ENCODE measurements at regions of chr2 and their contacts with region 1.

Region 1: DNA sequence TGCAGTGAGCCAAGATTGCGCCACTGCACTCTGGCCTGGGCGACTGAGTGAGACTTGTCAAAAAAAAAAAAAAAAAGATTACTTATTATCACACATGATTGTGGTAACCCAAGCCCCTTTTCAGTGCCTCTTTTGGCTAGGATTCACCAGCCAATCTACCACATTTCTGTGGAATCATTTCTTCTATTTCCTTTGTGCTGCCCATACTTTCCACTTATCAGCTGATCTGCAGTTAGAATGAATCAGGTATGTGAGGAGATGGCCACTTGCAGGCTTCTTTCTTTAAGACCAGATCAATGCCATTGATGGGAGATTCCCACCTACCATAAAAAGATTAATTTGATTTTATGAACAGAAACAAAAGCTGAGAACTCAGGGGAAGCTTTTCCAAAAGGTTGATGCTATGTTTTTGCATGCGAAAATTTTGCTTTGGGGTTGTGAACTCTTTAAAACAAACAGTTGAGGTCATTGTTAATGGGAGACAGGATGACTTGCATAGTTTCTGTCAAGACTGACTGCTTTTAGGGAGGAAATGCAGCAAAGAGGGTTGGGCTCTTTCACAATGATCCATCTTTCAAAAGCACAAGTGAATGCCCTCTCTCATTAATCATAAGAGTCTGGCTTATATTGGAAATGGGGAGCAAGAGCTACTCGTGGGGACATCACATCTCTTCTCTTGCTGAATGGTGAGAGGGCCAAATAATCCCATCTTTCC is 66.9 kb upstream of the CYP26B1 start:
- DNase-seq: peak; percentile 48
- H3K4me3 ChIP-seq: no peak overlapping the region
- H3K27ac ChIP-seq: no peak overlapping the region
- H3K4me1 ChIP-seq: peaks cover 6% of the 10 kb centered on the region
- H3K27me3 ChIP-seq: no peaks in the 10 kb centered on the region
- CTCF ChIP-seq: no peak

Region 2: DNA sequence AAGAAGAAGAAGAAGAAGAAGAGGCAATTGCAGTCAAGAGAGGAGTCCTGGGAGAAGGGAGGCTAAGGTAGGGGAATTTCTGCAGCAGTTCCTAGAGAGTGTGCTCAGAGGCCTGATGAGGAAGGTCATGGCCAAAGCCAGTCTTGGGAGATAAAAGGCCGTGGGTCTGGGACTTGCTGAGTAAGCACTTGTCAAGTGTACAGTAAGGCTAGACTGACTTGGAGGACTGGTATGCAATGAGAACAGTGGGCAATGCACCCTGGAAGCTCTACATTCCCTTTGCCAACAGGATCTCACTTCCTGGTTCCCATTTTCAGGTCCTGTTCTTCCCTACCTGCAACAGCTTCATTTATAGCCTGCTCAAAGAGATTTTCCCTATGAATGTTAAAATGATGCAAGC is 38.3 kb before region 1 on chr2:
- CTCF ChIA-PET with region 1: no interaction called
- dilution Hi-C with region 1: loop called (anchors 5 kb)
- in situ Hi-C with region 1: no loop called
- intact Hi-C with region 1: no loop called
- DNase-seq: no peak
- H3K4me3 ChIP-seq: no peak overlapping the region
- H3K27ac ChIP-seq: no peak overlapping the region
- H3K4me1 ChIP-seq: no peaks in the 10 kb centered on the region
- H3K27me3 ChIP-seq: no peaks in the 10 kb centered on the region
- CTCF ChIP-seq: no peak

Region 3: GRCh38 chr2:72254831-72255447 is 40.4 kb after region 1 on chr2:
- CTCF ChIA-PET with region 1: no interaction called
- dilution Hi-C with region 1: loop called (anchors 5 kb)
- in situ Hi-C with region 1: no loop called
- intact Hi-C with region 1: no loop called
- DNase-seq: no peak
- H3K4me3 ChIP-seq: no peak overlapping the region
- H3K27ac ChIP-seq: no peak overlapping the region
- H3K4me1 ChIP-seq: no peaks in the 10 kb centered on the region
- H3K27me3 ChIP-seq: no peaks in the 10 kb centered on the region
- CTCF ChIP-seq: no peak

Region 4: GRCh38 chr2:72533765-72534164 is 319.2 kb after region 1 on chr2:
- CTCF ChIA-PET with region 1: no interaction called
- dilution Hi-C with region 1: no loop called
- in situ Hi-C with region 1: no loop called
- intact Hi-C with region 1: no loop called
- DNase-seq: peak; percentile 62
- H3K4me3 ChIP-seq: no peak overlapping the region
- H3K27ac ChIP-seq: no peak overlapping the region
- H3K4me1 ChIP-seq: peaks cover 3% of the 10 kb centered on the region
- H3K27me3 ChIP-seq: no peaks in the 10 kb centered on the region
- CTCF ChIP-seq: no peak